ENCODE measurements at regions of chr1 and their contacts with region 1.

Region 1: GRCh38 chr1:162678439-162678838 is 46.2 kb downstream of the DDR2 start:
- DNase-seq: peak in 1 of 2 experiments; percentile 44
- H3K4me3 ChIP-seq: no peak overlapping the region
- H3K27ac ChIP-seq: no peak overlapping the region
- H3K4me1 ChIP-seq: 0 out of 2 replicates have a peak, but pooled peaks cover 12% of the 10 kb centered on the region
- H3K27me3 ChIP-seq: no peaks in the 10 kb centered on the region
- CTCF ChIP-seq: no peak

Region 2: GRCh38 chr1:162696286-162696862 is 17.9 kb after region 1 on chr1:
- CTCF ChIA-PET with region 1: no interaction called
- POLR2A ChIA-PET with region 1: interaction called, 3 read pairs
- intact Hi-C with region 1: loop called (anchors 2 kb)
- DNase-seq: peak; percentile 65 to 81
- H3K4me3 ChIP-seq: peak overlapping the region; percentile 34; the same call in 1 of the 2 replicates
- H3K27ac ChIP-seq: peak overlapping the region; percentile 50
- H3K4me1 ChIP-seq: peaks cover 31% of the 10 kb centered on the region
- H3K27me3 ChIP-seq: no peaks in the 10 kb centered on the region
- CTCF ChIP-seq: no peak

Region 3: DNA sequence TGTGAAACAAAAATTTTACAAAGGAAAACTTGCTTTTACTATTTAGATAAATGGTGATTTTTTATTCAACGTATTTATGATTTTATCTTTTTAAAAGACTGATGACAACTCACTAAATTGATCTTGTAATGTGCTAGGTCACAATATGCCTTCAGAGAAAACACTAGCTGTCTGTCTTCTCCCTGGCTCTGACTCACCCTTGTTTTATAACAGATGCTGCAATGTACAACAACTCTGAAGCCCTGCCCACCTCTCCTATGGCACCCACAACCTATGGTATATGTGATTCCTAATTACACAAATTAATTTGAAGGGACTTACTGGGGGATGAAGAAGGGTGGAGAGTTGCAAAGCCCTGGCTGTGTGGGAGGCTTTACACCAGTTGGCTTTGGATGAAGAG is 87.3 kb after region 1 on chr1:
- CTCF ChIA-PET with region 1: no interaction called
- POLR2A ChIA-PET with region 1: no interaction called
- intact Hi-C with region 1: loop called (anchors 10 kb)
- DNase-seq: no peak
- H3K4me3 ChIP-seq: no peak overlapping the region
- H3K27ac ChIP-seq: no peak overlapping the region
- H3K4me1 ChIP-seq: no peaks in the 10 kb centered on the region
- H3K27me3 ChIP-seq: no peaks in the 10 kb centered on the region
- CTCF ChIP-seq: no peak

Measured in PC-9 (cell line).